ENCODE measurements at regions of chr2 and their contacts with region 1.

Region 1: DNA sequence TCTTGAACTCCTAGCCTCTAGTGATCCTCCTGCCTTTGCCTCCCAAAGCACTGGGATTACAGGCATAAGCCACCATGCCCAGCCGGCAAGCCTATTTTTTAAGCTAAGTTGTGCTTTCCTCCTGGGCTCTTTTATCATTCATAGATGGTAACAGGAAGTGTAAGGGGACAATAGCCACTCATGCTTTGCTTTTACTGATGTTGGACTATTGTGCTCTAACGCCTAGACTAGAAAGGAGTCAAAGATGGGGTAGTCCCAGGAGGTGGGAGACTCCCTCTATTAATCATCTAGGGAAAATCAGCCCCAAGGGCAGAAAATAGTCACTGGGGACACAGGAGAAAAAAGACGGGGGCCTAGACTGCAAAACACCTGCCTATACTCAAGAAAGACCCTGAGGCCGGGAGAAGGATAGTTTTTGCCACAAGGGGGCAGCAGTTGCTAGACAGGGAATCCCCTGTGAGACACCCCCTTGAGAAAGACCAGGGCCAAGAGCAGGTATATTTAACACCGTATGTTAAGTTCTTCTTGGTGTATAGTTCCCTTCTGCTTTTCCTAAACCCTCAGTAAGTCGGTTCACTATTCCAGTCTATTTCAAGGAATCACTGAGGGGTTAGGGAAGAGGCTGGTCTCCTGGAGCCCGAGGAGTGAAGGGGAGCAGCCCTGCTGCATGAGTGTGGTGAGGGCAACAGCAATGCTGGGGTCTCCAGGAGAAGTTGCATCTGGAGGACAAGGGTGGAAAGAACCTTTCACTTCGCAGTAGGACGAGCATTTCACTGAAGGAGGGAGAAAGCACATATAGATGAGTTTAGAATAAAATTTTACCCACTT is 2.1 kb upstream of the CXCR1 start:
- DNase-seq: peak; percentile 71
- CTCF ChIP-seq: peak; percentile 43

Region 2: GRCh38 chr2:218152765-218153164 is 16.1 kb before region 1 on chr2:
- CTCF ChIA-PET with region 1: interaction called, 15 read pairs
- POLR2A ChIA-PET with region 1: no interaction called
- DNase-seq: no peak
- CTCF ChIP-seq: no peak

Region 3: GRCh38 chr2:218180467-218181114 is 11.7 kb after region 1 on chr2:
- CTCF ChIA-PET with region 1: interaction called, 15 read pairs
- POLR2A ChIA-PET with region 1: no interaction called
- DNase-seq: no peak
- CTCF ChIP-seq: no peak

Measured in GM10248 (cell line).